ENCODE measurements at regions of chr3 and their contacts with region 1.

Region 1: GRCh38 chr3:103112273-103112672 is 677.5 kb downstream of the ZPLD1 start:
- DNase-seq: no peak
- ATAC-seq: no peak

Region 2: DNA sequence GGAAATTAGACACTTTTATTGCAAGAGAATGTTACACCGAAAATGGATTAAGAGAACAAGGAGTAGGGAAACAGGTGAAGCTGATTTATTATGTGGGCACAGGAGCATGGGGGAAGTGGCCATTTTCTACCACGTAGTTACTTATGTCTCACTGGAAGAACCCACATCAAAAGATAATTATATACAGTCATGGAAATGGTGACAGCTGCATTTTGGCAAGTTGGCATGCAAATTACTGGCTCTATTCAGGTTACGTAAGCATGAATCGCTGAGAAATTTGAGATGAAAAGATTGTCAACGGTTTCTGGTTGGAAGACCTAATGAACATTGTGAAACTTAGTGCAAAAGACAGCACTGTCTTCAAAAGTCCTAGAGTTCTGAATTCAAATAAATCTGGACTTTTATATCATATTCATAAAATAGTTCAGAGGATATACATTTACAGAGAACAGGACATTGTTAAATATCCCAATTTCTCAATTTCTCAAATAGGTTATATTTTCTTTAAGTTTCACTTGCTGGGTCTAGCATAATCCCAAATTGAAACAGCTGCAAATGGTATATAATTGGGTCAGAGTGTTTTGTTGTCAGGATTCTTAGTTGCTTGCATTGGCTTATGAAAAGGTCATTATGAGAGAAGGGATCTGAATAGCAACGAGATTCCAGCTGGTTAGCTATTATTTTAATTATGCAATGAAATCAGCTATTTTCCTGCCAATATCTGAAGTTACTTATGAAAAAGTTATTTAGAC is 109.7 kb before region 1 on chr3:
- intact Hi-C with region 1: loop called in 1 of 2 experiments (anchors 5 kb)
- DNase-seq: no peak
- ATAC-seq: no peak

Measured in left cardiac atrium (tissue), 4 donors.